Activated CD4-positive, alpha-beta memory T cell treated with anti-CD3 and anti-CD28 coated beads, Interleukin-2, amount 10 ng/mL, durations not matched to agents 7 days and 5 days (primary cell): ENCODE measurements at regions of chr4 and their contacts with region 1.

Region 1: DNA sequence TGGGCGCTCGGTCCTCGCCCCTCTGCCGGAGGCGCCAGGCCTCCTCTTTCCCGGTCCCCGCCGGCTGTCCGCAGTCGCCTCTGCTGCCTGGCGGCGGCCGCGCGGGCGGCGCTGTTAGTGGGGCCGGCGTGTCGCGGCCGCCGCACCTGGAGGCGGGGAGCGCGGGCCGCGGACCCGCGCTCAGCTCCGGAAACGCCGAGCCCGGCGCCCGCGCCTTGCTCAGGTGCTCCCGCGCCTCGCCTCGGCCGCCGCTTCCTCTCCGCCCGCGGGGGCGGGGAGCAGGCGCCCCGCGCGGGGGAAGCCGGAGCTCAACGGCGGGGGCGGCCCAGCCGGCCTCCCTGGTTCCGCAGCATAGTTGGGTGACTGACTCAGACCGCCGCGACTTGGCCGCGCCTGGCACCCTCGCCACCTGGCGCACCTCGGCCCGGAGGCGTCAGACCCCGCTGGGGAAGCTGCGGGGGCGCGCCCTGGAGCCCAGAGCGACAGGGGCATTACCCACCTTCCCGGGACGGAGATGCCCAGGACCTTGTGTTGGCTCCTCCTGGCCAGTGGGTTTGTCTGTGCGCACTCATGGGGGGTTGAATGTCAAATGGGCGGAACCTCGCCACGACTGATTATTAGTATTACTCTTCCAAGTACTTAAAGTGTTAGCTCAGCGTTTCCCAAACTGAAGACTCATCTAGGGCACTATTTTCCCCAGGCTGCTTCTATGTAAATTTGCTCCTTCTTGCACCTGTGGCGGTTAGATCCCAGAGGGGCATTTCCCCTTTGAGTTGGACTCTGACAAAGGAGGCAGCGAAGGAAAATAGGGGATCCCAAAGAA is at the start of gene ARAP2:
- DNase-seq: peak; percentile 78
- H3K4me3 Mint-ChIP-seq: peak within 1 kb of the TSS; percentile 95
- H3K27ac Mint-ChIP-seq: peak within 1 kb of the TSS; percentile 92
- H3K4me1 Mint-ChIP-seq: peaks cover 40% of the 10 kb centered on the region
- H3K27me3 Mint-ChIP-seq: peaks cover 5% of the 10 kb centered on the region
- total RNA-seq, gene ARAP2: 70.7 to 76.4 TPM

Region 2: DNA sequence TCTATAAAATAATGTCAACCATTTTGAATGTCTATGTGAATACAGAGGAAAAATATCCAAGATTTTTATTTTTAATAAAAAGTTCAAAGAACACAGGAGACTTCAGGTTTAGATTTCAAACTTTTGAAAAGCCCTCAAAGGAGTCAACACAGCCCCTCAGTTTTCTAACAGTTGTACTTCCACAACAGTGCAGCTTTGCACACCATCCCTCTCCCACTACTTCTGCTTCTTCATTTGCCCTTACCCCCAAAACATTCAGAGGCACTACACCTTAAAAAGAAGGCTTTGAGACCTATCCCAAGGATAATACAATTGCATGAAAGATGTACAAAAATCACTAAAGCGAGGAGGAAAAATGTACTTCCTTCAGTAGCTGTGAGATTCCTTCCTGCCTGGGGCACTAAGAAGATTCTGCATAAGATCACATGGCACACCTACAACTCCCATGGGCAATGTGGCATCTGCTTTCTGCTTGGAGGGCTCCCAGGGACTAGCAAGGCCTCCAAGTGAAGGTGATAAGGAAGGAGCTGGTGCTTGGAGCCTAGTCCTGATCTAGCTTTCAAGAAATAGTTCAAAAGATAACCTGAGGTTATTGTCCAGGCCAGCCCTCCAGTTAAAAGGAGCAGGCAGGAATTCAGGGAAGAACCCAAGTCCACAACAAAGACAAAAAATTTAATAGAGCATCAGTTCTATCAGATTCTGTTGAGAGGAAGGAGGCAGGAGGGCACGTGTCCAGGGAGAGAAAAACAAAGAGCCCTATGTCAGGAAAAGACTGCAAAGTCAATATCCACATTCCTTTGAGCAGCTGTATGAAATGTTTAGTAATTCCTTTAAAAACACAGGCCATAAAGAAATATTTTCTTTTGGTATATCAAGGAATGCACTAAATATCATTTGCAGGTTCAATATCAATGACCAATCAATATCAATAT is 19.2 kb before region 1 on chr4:
- CTCF ChIA-PET with region 1: interaction called, 3 read pairs
- POLR2A ChIA-PET with region 1: interaction called, 13 read pairs
- DNase-seq: no peak
- H3K4me3 Mint-ChIP-seq: no peak overlapping the region
- H3K27ac Mint-ChIP-seq: no peak overlapping the region
- H3K4me1 Mint-ChIP-seq: peaks cover 33% of the 10 kb centered on the region
- H3K27me3 Mint-ChIP-seq: no peaks in the 10 kb centered on the region

Region 3: DNA sequence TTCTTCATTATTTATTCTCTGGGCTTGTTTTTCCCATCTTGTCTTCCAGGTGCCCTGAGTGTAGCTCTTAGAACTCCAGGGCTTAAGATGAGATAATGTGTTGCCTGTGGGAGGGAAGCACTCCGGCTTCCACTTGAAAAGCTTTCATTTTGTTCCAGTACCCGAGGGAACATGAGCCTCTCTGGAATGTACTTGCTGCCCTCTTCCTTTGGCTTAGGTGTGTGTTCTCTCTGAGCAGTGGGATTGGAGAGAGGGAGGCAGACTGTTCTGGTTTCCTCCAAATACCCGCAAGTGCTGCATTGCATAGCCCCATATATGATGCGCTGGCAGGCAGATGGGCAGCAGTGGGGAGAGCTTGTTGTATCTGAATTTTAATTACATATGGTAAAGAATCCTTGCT is 36.1 kb after region 1 on chr4:
- CTCF ChIA-PET with region 1: interaction called, 27 read pairs
- POLR2A ChIA-PET with region 1: interaction called, 111 read pairs
- DNase-seq: no peak
- H3K4me3 Mint-ChIP-seq: no peak overlapping the region
- H3K27ac Mint-ChIP-seq: no peak overlapping the region
- H3K4me1 Mint-ChIP-seq: peaks cover 78% of the 10 kb centered on the region
- H3K27me3 Mint-ChIP-seq: peaks cover 2% of the 10 kb centered on the region

Region 4: DNA sequence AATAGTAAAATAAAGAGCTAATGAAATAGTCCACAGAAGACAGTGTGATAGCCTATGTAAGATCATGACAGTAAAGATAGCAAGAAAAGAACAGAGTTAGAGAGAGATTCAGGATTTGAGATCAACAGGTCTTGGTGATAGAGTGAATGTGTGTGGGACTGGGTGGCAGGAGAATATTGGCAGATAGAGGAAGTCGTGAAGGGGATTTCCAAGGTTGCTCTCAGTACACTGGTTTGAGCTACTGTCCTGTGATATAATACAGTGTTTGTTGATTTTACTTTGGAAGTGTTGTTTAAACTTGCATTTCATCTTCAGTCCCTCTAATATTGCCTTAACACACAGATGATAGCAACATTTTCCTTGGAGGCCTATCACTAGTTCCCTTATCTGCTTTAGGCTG is 81.0 kb after region 1 on chr4:
- CTCF ChIA-PET with region 1: interaction called, 4 read pairs
- POLR2A ChIA-PET with region 1: interaction called, 15 read pairs
- DNase-seq: no peak
- H3K4me3 Mint-ChIP-seq: no peak overlapping the region
- H3K27ac Mint-ChIP-seq: peak overlapping the region; percentile 13
- H3K4me1 Mint-ChIP-seq: peaks cover 58% of the 10 kb centered on the region
- H3K27me3 Mint-ChIP-seq: peaks cover 2% of the 10 kb centered on the region

Region 5: GRCh38 chr4:36385951-36386571 is 141.6 kb after region 1 on chr4:
- CTCF ChIA-PET with region 1: no interaction called
- POLR2A ChIA-PET with region 1: interaction called, 10 read pairs
- DNase-seq: peak; percentile 57
- H3K4me3 Mint-ChIP-seq: peak overlapping the region; percentile 21
- H3K27ac Mint-ChIP-seq: peak overlapping the region; percentile 86
- H3K4me1 Mint-ChIP-seq: peaks cover 26% of the 10 kb centered on the region
- H3K27me3 Mint-ChIP-seq: no peaks in the 10 kb centered on the region